ENCODE measurements at regions of chr13 and their contacts with region 1.

Region 1: DNA sequence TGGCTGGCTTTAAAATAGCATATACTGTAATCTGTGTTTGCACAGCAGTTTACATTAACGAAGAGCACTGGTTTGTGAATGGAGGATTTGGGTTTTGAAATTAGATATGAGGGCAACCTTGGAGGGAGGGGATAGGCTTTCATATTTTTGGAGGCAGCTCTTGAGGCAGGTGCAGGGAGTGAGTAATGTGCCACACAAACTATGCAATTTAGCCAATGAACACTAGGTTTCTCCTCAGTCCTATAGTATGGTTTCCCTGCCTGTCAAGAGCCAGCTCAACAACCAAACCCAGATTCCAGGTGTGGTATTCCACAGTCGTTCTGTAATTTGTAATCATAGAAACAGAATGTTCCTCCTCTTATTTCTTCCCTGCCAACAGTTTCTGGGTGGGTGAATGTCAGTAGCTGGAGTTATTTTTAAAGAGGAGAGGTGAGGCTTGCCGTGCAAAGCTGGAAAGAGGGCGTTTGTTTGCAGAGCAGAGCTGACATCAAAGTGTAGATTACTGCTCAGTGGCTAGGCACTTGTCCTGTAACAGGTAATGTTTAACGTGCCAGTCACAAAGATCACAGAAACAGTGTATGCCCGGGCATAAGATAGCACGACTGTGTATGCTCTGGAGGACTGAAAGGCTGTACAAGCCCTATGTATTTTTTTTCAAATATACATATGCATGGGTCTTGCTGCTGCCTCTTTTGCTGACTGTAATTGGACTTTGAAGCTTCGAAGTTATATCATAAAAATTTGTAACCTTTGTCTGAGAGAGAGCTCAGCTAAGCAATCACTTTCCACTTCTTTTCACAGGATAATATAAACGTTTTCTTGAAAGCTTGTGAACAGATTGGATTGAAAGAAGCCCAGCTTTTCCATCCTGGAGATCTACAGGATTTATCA is 124.2 kb downstream of the LMO7 start:
- DNase-seq: peak; percentile 66 to 71
- ATAC-seq: peak; percentile 88 to 92
- H3K4me3 ChIP-seq: peak overlapping the region; percentile 51 to 60 (median 56)
- H3K27ac ChIP-seq: peak overlapping the region; percentile 84 to 92 (median 88)
- H3K4me1 ChIP-seq: peaks cover 17 to 21% of the 10 kb centered on the region in 2 donors
- H3K27me3 ChIP-seq: no peaks in the 10 kb centered on the region
- CTCF ChIP-seq: peak in 4 of 5 experiments; percentile 18 to 35 (median 26)
- POLR2A ChIP-seq: peak; percentile 57 to 89

Region 2: DNA sequence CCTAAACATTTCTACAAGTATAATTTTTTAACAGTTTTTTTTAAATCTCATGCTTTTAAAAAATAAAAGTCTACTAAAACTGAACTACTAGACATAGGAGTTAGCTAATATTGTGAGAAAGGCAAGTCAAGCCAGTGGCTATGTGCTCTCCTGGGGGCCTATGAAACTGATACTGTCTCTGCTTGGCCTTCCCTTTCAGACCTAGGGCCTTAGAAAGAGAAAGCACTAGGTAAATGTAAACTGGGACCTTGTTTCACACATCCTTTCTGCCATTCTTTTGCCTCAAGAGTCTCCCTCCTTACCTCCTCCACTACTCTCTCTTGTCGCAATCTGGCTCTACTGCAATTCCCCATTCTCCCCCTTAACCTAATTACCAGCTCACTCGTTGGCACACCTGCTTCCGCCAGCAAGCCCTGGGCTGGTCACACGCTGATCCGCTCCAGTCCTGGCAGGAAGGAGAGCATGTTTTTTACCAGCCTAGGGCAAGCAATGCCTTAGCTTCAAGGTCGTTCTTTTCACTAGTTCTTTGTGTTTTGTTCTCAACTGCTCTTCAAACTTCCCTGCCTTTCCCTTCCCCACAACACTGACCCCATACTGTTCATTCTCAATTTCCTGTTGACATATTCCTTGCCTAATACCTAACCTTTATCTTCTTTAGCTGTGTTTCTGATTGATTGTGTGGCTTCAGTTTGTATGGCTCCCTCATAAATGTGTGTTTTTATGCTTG is 301.5 kb before region 1 on chr13:
- in situ Hi-C with region 1: no loop called
- intact Hi-C with region 1: loop called (anchors 10 kb)
- DNase-seq: peak; percentile 84
- ATAC-seq: peak; percentile 84 to 95
- H3K4me3 ChIP-seq: peak overlapping the region in 3 of 4 donors; percentile 4 to 20 (median 11)
- H3K27ac ChIP-seq: peak overlapping the region; percentile 85 to 98 (median 92)
- H3K4me1 ChIP-seq: peaks cover 84 to 91% of the 10 kb centered on the region in 2 donors
- H3K27me3 ChIP-seq: no peaks in the 10 kb centered on the region
- CTCF ChIP-seq: no peak
- POLR2A ChIP-seq: no peak

Region 3: DNA sequence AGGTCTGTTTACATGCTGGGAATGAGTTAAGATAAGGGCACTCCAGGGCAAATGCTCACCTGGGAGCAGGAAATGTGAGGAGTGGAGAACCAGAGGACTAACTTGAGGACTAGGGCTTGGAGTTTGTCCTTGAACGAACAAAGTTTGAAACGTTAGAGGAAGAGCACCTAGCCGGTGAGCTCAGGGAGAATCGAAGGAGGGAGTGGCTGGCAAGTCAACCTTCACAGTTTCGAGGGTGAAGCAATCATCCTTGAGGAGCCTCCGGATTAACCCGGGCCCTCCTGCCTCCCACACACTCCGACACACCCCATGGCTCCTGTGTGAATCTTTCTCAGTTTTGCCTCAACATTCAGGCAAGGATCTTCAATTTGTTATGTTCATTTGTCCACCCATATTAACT is 65.7 kb before region 1 on chr13:
- in situ Hi-C with region 1: no loop called
- intact Hi-C with region 1: loop called (anchors 5 kb)
- DNase-seq: no peak
- ATAC-seq: no peak
- H3K4me3 ChIP-seq: no peak overlapping the region
- H3K27ac ChIP-seq: no peak overlapping the region
- H3K4me1 ChIP-seq: peaks cover 0 to 4% of the 10 kb centered on the region in 2 donors
- H3K27me3 ChIP-seq: no peaks in the 10 kb centered on the region
- CTCF ChIP-seq: no peak
- POLR2A ChIP-seq: no peak

Region 4: DNA sequence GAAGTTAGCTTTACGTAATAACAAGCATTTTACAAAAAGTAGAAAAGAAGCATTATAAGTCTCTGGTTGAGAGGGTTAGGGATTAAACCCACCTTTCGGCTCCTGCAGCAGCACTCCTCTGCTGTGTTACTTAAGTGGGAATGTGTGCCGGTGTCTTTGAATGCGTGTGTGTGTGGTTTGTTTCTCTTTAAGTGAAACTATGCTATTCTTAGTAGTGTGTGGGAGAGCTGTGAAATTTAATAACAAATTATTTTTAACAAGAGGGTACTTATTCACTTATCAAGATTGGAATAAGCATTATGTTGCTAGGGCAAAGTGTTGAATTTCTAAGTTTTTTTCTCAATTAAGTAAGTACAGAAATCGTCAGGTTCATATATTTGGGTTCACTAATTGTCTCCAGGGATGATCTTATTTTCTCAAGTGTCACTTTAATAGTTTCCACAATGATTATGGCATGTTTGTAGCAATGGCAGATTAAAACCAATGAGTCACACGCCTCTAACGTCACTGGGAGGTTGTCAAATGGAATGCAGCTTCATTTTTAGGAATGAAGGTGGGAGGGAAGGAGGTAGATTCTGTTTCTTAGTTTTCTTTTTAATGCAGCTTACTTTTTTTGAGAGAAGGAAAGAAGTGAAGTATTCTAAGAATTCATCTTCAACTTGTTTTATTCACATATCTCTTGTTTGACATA is 27.0 kb after region 1 on chr13:
- in situ Hi-C with region 1: no loop called
- intact Hi-C with region 1: loop called (anchors 1 kb)
- DNase-seq: no peak
- ATAC-seq: no peak
- H3K4me3 ChIP-seq: peak overlapping the region in 3 of 4 donors; percentile 13 to 38 (median 21)
- H3K27ac ChIP-seq: peak overlapping the region; percentile 86 to 88 (median 87)
- H3K4me1 ChIP-seq: peaks cover 63 to 74% of the 10 kb centered on the region in 2 donors
- H3K27me3 ChIP-seq: no peaks in the 10 kb centered on the region
- CTCF ChIP-seq: no peak
- POLR2A ChIP-seq: no peak

Region 5: DNA sequence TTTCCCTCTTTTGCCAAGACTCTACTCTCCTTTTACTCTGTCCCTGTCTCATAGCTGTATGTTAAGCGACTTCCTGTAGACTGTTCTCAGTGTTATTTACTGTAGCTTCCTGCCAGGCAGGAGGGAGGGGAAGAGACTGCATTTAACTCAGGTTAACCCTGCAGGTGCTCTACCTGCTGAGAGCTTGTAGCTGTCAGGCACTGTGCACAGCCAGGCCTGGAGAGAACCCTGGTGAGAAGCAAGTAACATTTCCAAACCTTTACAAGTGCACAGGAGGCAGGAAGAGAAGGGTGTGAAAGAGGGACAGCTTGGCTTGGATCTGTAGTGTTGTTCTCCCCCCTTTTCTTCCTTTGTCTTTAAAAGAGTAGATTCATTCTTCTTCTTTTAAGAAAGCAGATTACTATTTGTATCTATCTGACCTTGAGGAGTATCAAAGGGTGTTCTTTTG is 42.8 kb after region 1 on chr13:
- in situ Hi-C with region 1: no loop called
- intact Hi-C with region 1: loop called (anchors 5 kb)
- DNase-seq: no peak
- ATAC-seq: peak in 1 of 2 donors; percentile 19
- H3K4me3 ChIP-seq: no peak overlapping the region
- H3K27ac ChIP-seq: peak overlapping the region; percentile 37 to 59 (median 42)
- H3K4me1 ChIP-seq: peaks cover 17 to 24% of the 10 kb centered on the region in 2 donors
- H3K27me3 ChIP-seq: no peaks in the 10 kb centered on the region
- CTCF ChIP-seq: no peak
- POLR2A ChIP-seq: no peak

Region 6: GRCh38 chr13:75908141-75908540 is 147.8 kb after region 1 on chr13:
- in situ Hi-C with region 1: no loop called
- intact Hi-C with region 1: no loop called
- DNase-seq: peak; percentile 21 to 23
- ATAC-seq: peak; percentile 69 to 80
- H3K4me3 ChIP-seq: no peak overlapping the region
- H3K27ac ChIP-seq: no peak overlapping the region
- H3K4me1 ChIP-seq: peaks cover 6 to 12% of the 10 kb centered on the region in 2 donors
- H3K27me3 ChIP-seq: no peaks in the 10 kb centered on the region
- CTCF ChIP-seq: no peak
- POLR2A ChIP-seq: no peak